Panc1 (cell line): ENCODE measurements at regions of chr17 and their contacts with region 1.

Region 1: DNA sequence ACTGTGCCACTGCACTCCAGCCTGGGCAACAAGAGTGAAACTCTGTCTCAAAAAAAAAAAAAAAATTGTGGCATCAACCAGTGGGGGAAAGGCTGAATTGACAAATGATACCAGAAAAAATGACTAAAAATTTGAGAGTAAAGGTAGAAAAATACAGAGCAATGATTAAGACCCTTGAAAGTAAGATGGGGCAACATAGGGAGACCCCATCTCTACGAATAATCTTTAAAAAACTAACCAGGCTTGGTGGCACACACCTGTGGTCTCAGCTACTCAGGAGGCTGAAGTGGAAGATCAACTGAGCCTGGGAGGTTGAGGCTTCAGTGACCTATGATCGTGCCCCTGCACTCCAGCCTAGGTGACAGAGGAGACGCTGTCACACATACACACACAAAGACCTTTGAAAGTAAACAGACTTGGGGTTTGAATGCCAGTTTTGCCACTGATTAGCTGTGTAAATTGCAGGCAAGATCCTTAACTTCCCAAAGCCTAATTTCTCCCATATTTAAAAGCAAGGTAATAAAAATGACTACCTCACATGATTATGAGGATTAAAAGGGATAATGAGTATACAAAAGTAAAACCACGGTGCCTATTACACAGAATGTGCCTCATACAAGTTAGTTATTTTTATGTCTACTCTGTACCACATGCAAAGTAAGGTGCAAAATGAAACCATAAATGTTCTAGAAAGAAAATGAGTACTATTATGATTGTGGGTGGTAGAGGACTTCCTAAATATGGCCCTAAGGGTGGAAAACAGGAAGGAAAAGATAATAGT is 21.7 kb upstream of the PAFAH1B1 start:
- DNase-seq: no peak
- ATAC-seq: no peak
- H3K4me3 ChIP-seq: no peak overlapping the region
- H3K27ac ChIP-seq: no peak overlapping the region
- H3K4me1 ChIP-seq: no peaks in the 10 kb centered on the region
- H3K27me3 ChIP-seq: no peaks in the 10 kb centered on the region
- CTCF ChIP-seq: no peak

Region 2: GRCh38 chr17:2549392-2550211 is 22.1 kb before region 1 on chr17:
- CTCF ChIA-PET with region 1: interaction called, 15 read pairs
- POLR2A ChIA-PET with region 1: no interaction called
- in situ Hi-C with region 1: no loop called
- intact Hi-C with region 1: no loop called
- DNase-seq: no peak
- ATAC-seq: no peak
- H3K4me3 ChIP-seq: no peak overlapping the region
- H3K27ac ChIP-seq: no peak overlapping the region
- H3K4me1 ChIP-seq: no peaks in the 10 kb centered on the region
- H3K27me3 ChIP-seq: no peaks in the 10 kb centered on the region
- CTCF ChIP-seq: no peak

Region 3: GRCh38 chr17:2592971-2593820 is 21.5 kb after region 1 on chr17 and contains the start of gene PAFAH1B1:
- CTCF ChIA-PET with region 1: no interaction called
- POLR2A ChIA-PET with region 1: no interaction called
- in situ Hi-C with region 1: no loop called
- intact Hi-C with region 1: no loop called
- DNase-seq: no peak
- ATAC-seq: peak; percentile 93
- H3K4me3 ChIP-seq: peak within 1 kb of the TSS; percentile 84 to 93
- H3K27ac ChIP-seq: peak within 1 kb of the TSS; percentile 91
- H3K4me1 ChIP-seq: peaks cover 13% of the 10 kb centered on the region
- H3K27me3 ChIP-seq: no peaks in the 10 kb centered on the region
- CTCF ChIP-seq: no peak
- total RNA-seq, gene PAFAH1B1: 120 TPM

Region 4: GRCh38 chr17:2624292-2624731 is 52.6 kb after region 1 on chr17:
- CTCF ChIA-PET with region 1: no interaction called
- POLR2A ChIA-PET with region 1: no interaction called
- in situ Hi-C with region 1: no loop called
- intact Hi-C with region 1: no loop called
- DNase-seq: no peak
- ATAC-seq: no peak
- H3K4me3 ChIP-seq: no peak overlapping the region
- H3K27ac ChIP-seq: no peak overlapping the region
- H3K4me1 ChIP-seq: no peaks in the 10 kb centered on the region
- H3K27me3 ChIP-seq: no peaks in the 10 kb centered on the region
- CTCF ChIP-seq: no peak